ENCODE measurements at regions of chr3 and their contacts with region 1.

Region 1: DNA sequence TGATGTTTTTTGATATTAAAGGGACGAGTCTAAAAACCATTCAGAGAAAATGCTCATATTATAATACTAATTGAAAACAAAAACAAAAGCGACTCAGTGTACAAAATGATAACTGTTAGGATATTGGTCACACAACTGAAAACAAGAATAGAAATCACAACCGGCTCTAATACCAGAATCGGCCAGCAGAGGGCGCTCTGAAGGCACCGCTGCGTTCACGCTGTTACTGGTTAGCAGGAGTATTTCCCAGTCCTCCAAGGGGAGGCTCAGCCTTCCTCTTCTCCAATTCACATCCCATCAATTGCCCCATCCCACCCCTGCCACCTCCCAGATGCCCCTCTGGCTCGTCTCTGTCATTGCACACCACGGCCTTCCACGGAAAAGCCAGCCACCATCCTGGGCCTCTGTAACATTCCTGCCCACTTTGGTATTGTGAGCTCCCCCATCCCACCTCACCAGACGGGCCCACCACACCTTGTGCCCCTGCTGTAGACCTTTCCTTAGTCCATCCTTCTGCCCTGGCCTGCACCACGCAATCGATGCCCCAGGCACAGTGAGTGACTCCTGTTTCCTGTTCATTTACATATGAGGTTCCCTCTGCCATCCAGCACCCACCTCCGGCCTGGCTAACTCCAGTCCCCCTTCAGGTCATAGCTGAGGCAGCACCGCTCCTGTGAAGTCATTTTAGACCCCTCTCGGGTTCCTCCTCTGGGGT is 8.5 kb downstream of the FAM107A start:
- DNase-seq: peak; percentile 32
- H3K4me3 ChIP-seq: no peak overlapping the region
- H3K27ac ChIP-seq: no peak overlapping the region
- H3K27me3 ChIP-seq: no peaks in the 10 kb centered on the region
- CTCF ChIP-seq: peak; percentile 90

Region 2: DNA sequence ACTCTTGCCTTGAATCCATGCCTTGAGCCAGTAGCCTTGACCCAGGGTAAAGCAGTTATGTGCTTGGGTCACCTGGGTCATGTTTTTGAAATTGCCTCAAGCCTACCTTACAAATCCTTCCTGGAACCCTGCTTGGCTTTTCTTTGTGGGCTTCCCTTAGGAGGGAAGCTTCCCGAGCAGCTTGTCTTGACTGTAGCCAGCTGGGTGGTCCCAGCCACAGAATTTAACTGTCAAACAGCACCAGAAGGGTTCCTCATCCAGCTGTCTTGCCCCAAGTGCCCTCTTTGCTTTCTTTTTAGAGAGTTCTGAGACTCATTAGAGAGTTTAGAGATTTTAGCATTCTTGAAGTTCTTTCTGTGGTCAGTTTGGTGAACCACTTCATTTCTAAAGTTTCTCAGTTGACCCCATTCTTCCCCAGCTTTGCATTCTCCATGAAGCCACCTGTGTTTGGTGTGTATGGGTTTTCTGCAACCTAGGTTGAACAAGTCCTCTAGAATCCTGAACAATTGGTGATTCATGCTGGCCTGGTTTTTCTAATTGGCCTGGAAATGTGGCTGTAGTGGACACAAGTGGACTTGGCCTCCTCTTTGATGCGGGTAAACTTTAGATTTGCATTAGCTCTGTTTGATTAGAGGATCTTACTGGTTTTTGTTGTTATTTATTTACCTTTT is 526.9 kb before region 1 on chr3:
- CTCF ChIA-PET with region 1: no interaction called
- POLR2A ChIA-PET with region 1: no interaction called
- DNase-seq: peak; percentile 71
- H3K4me3 ChIP-seq: no peak overlapping the region
- H3K27ac ChIP-seq: peak overlapping the region; percentile 79
- H3K27me3 ChIP-seq: no peaks in the 10 kb centered on the region
- CTCF ChIP-seq: no peak

Region 3: DNA sequence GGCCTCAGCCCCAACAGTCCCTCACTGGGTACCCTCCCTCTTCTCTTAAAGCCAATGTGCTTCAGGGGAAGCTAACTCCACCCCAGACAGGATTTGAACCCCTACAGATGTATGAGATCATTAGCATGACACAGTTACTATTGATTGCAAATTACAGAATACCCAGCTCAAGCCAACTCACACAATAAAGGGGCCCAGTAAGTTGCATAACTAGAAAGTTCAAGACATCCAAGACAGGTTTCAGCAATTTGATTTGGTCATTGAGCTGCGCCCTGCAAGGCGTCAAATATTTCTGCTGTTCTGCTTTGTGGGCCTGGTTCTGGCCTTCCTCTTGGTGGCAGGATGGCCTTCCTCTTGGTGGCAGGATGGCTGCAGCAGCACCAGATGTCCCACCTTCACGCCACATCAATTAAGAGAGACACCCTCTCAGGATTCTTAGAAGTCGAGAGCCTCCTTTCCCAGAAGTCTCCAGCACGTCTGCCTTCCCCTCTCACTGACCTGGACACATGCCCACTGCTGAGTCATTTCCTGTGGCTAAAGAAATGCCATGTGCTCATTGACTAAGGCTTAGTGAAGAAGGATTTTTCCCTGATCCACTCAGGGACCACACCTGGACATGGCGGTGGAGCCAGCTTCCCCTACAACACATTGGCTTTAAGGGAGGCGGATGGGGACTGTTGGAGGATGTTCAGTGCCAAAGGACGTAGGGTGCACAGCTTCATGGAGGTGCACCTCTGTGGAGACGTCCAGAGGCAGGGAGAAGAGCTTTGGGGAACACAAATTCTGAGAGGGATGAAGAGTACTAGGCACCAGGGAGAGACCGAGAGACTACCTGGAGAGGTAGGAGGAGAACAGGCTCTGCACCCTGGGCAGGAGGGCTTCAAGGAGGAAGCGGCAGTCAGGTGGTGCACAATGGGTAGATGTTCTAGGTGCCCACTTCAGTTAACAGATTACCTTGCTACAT is 407.0 kb before region 1 on chr3:
- CTCF ChIA-PET with region 1: no interaction called
- POLR2A ChIA-PET with region 1: no interaction called
- DNase-seq: peak; percentile 88
- H3K4me3 ChIP-seq: no peak overlapping the region
- H3K27ac ChIP-seq: peak overlapping the region; percentile 68
- H3K27me3 ChIP-seq: no peaks in the 10 kb centered on the region
- CTCF ChIP-seq: no peak

Region 4: GRCh38 chr3:58520403-58521335 is 48.1 kb before region 1 on chr3:
- CTCF ChIA-PET with region 1: no interaction called
- POLR2A ChIA-PET with region 1: no interaction called
- DNase-seq: no peak
- H3K4me3 ChIP-seq: no peak overlapping the region
- H3K27ac ChIP-seq: no peak overlapping the region
- H3K27me3 ChIP-seq: no peaks in the 10 kb centered on the region
- CTCF ChIP-seq: no peak

Region 5: DNA sequence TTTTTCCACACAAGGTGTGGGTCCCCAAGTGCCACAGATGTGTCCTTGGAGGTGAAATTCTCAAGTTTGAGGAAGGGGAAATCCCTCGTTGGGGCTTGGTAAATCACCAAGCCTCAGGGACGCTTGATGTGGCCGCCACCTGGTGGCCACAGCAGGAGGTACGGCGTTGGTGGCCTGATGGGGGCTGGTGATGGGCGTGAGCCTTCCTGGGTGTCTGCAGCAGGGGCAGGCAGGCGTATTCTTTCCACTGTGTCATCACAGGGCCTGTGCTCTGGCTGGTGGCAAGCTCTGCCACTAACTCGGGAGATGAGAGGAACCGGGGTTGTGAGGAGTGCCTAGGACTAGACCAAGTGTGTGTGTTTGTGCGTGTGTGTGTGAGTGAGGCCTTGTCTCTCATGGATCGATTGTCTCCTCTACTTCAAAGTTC is 35.9 kb before region 1 on chr3:
- CTCF ChIA-PET with region 1: interaction called, 20 read pairs
- POLR2A ChIA-PET with region 1: no interaction called
- DNase-seq: peak; percentile 16
- H3K4me3 ChIP-seq: no peak overlapping the region
- H3K27ac ChIP-seq: no peak overlapping the region
- H3K27me3 ChIP-seq: no peaks in the 10 kb centered on the region
- CTCF ChIP-seq: peak; percentile 93

Region 6: GRCh38 chr3:58585005-58585786 is 16.5 kb after region 1 on chr3:
- CTCF ChIA-PET with region 1: interaction called, 40 read pairs
- POLR2A ChIA-PET with region 1: no interaction called
- DNase-seq: no peak
- H3K4me3 ChIP-seq: peak overlapping the region; percentile 67
- H3K27ac ChIP-seq: no peak overlapping the region
- H3K27me3 ChIP-seq: peaks cover 32% of the 10 kb centered on the region
- CTCF ChIP-seq: peak; percentile 77

Region 7: DNA sequence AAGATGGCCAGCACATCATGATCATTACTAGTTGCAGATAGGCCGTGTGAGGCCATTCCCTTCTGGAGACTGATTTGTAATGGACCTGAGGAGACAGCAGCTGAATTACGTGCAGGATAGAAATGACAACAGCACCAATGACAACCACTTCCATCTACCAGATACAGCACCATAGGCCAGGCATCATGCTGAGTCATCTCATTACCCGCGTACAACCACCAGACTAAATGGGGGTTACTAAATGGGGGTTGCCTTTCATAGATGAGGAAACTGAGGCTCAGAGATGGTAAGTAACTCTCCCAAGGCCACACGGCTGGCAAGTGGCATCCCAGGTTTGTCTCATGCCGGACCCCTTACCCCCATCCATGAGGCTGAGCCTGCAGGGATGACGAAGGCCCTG is 41.3 kb after region 1 on chr3:
- CTCF ChIA-PET with region 1: interaction called, 13 read pairs
- POLR2A ChIA-PET with region 1: no interaction called
- DNase-seq: no peak
- H3K4me3 ChIP-seq: no peak overlapping the region
- H3K27ac ChIP-seq: no peak overlapping the region
- H3K27me3 ChIP-seq: peaks cover 16% of the 10 kb centered on the region
- CTCF ChIP-seq: no peak

Region 8: DNA sequence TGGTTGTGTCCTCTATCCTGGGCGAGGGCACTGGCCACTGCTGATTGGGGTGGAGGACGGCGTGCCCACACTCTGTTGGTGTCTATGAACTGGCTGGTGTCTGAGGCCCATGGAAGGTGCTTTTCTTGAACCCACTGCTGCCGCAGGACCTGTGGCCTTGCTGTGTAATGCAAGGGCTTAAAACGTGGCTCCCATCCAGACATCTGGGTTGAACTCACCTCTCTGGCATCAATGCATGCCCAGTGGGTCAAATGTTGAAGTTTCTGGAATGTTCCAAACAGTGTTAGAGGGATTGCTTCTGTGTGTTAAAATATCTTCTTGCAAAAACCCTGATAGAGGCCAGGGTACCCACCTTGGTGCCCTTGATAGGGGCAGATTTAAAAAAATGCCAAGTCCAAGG is 55.2 kb after region 1 on chr3:
- CTCF ChIA-PET with region 1: interaction called, 322 read pairs
- POLR2A ChIA-PET with region 1: no interaction called
- DNase-seq: no peak
- H3K4me3 ChIP-seq: no peak overlapping the region
- H3K27ac ChIP-seq: no peak overlapping the region
- H3K27me3 ChIP-seq: peaks cover 2% of the 10 kb centered on the region
- CTCF ChIP-seq: no peak

Region 9: GRCh38 chr3:58630076-58630709 is 61.5 kb after region 1 on chr3:
- CTCF ChIA-PET with region 1: interaction called, 322 read pairs
- POLR2A ChIA-PET with region 1: interaction called, 3 read pairs
- DNase-seq: no peak
- H3K4me3 ChIP-seq: no peak overlapping the region
- H3K27ac ChIP-seq: no peak overlapping the region
- H3K27me3 ChIP-seq: no peaks in the 10 kb centered on the region
- CTCF ChIP-seq: peak; percentile 83

Region 10: GRCh38 chr3:58640700-58641372 is 72.1 kb after region 1 on chr3:
- CTCF ChIA-PET with region 1: interaction called, 25 read pairs
- POLR2A ChIA-PET with region 1: no interaction called
- DNase-seq: peak; percentile 50
- H3K4me3 ChIP-seq: no peak overlapping the region
- H3K27ac ChIP-seq: no peak overlapping the region
- H3K27me3 ChIP-seq: no peaks in the 10 kb centered on the region
- CTCF ChIP-seq: peak; percentile 95

Measured in AG04450 (cell line).